ENCODE measurements at regions of chr16 and their contacts with region 1.

Region 1: GRCh38 chr16:84754353-84754856 is 54.6 kb downstream of the USP10 start:
- DNase-seq: peak; percentile 62
- H3K4me3 ChIP-seq: peak overlapping the region in 1 of 2 experiments; percentile 4; a peak in 1 of 4 replicates
- H3K27ac ChIP-seq: no peak overlapping the region
- H3K4me1 ChIP-seq: no peaks in the 10 kb centered on the region; a peak in 1 of 4 replicates
- H3K27me3 ChIP-seq: no peaks in the 10 kb centered on the region
- CTCF ChIP-seq: peak; percentile 85
- EP300 ChIP-seq: no peak
- RAD21 ChIP-seq: peak; percentile 93

Region 2: GRCh38 chr16:84459941-84460405 is 294.4 kb before region 1 on chr16:
- CTCF ChIA-PET with region 1: no interaction called
- POLR2A ChIA-PET with region 1: no interaction called
- DNase-seq: no peak
- H3K4me3 ChIP-seq: no peak overlapping the region
- H3K27ac ChIP-seq: no peak overlapping the region
- H3K4me1 ChIP-seq: no peaks in the 10 kb centered on the region; a peak in 1 of 4 replicates
- H3K27me3 ChIP-seq: no peaks in the 10 kb centered on the region
- CTCF ChIP-seq: no peak
- EP300 ChIP-seq: no peak
- RAD21 ChIP-seq: no peak

Region 3: DNA sequence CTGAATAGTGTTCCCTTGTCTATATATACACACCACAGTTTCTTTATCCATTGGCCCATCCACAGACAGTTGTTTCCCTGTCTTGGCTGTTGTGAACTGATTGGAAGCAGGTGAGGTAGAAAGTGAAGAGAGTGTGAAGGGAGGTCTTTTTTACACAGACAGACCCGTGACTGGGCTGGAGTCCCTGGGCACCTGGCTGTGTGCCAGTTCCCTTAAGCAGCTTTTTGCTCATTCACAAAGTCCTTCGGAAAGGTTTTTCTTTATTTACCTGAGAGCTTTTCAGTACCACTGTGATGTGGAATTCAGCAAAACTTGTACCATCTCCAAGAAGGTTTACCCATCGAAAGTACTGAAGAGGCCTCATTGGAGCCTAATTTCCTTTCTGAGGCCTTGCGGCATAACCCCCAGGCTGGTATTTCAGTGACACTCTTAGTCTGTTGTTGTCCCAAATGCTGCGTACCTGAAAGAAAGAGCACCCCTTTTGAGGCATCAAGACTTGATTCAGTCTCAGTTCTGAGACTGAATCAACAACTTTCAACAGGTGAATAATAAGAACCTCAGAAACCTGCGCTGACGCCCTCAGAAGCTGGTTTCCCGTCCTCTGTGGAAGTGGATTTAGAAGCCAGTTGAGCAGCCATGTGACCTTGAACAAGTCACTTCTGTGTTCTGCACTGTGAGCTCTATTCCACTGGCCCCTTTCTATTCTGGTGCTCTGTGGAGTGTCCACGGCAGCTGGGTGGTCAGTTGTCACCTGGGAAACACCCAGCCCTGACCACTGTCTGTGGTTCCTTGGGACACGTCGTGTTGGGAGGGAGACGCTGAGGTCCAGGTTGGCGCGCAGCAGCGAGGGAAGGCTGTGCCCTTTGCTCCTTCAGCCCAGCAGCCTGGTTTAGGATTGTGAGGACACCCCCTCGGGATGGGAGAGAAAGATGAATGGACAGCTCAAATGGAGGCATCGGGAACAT is 11.5 kb after region 1 on chr16:
- CTCF ChIA-PET with region 1: interaction called, 89 read pairs
- POLR2A ChIA-PET with region 1: no interaction called
- DNase-seq: no peak
- H3K4me3 ChIP-seq: no peak overlapping the region
- H3K27ac ChIP-seq: no peak overlapping the region
- H3K4me1 ChIP-seq: peaks cover 0 to 13% of the 10 kb centered on the region in 2 experiments; a peak in 2 of 4 replicates
- H3K27me3 ChIP-seq: no peaks in the 10 kb centered on the region
- CTCF ChIP-seq: no peak
- EP300 ChIP-seq: no peak
- RAD21 ChIP-seq: no peak

Region 4: DNA sequence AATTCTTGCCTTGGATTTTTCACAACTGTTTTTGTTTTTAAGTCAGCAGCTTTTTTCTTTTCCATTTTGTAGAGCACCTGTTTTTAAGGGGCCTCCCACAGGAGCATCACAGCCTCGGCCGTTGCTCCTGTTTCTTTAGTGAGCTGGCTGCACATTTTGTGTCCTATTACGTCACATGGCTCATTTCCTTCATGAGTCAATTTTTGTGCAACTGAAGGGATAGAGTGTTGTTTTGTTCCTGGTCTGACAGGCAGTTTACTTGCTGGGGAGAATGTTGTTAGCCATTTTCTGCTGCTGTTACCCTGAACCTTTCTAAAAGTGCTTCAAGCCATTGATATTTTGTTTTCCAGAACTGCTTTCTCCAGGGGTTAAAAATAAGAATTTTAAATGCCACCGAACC is 20.4 kb after region 1 on chr16:
- CTCF ChIA-PET with region 1: interaction called, 89 read pairs
- POLR2A ChIA-PET with region 1: no interaction called
- DNase-seq: no peak
- H3K4me3 ChIP-seq: no peak overlapping the region
- H3K27ac ChIP-seq: no peak overlapping the region
- H3K4me1 ChIP-seq: no peaks in the 10 kb centered on the region
- H3K27me3 ChIP-seq: no peaks in the 10 kb centered on the region
- CTCF ChIP-seq: no peak
- EP300 ChIP-seq: no peak
- RAD21 ChIP-seq: no peak

Region 5: DNA sequence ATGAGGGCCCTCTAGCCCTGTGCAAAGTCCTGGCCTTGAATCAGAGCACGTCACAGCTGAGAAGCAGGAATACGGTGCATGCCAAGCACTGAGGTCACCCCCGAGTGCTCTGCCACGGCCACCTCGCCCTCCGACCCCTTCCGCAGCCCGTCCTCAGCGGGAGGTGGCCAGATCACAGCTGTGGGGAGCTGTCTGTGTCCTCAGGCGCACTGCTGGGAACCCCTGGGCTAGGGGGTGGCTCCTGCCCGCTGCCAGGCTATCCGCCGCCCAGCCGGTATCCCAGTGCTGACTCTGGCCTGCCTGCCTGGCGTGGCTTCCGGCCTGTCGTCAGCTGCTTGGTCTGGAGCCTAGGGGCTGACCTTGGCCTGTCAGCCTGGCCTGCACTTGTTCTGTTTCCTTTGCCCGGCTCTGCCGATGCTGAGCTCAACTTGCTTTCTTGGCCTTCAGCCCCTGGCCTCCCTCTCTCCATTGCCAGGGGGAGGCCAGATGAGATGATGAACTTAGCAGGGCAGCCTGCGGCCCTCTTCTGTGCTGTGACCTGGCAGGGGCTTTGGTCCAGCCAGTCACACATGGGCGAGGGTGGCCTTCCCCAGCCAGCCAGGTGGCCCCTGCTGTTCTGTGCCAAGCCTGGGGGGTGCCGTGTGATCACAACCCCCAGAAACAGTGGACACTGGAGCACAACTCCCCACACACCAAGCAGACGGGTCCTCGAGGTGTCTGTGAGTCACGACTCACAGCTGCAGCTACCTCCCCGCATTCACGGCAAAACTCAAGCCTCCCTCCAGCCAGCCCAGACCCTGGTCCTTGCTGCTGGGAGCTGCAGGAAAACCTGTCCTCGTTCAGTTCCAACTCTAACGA is 179.6 kb after region 1 on chr16:
- CTCF ChIA-PET with region 1: interaction called, 12 read pairs
- POLR2A ChIA-PET with region 1: no interaction called
- DNase-seq: peak; percentile 48
- H3K4me3 ChIP-seq: no peak overlapping the region
- H3K27ac ChIP-seq: no peak overlapping the region
- H3K4me1 ChIP-seq: peaks cover 0 to 11% of the 10 kb centered on the region in 2 experiments; a peak in 1 of 4 replicates
- H3K27me3 ChIP-seq: no peaks in the 10 kb centered on the region
- CTCF ChIP-seq: no peak
- EP300 ChIP-seq: no peak
- RAD21 ChIP-seq: no peak

Region 6: GRCh38 chr16:84940670-84941551 is 186.5 kb after region 1 on chr16:
- CTCF ChIA-PET with region 1: interaction called, 10 read pairs
- POLR2A ChIA-PET with region 1: no interaction called
- DNase-seq: peak; percentile 93
- H3K4me3 ChIP-seq: no peak overlapping the region
- H3K27ac ChIP-seq: no peak overlapping the region
- H3K4me1 ChIP-seq: peaks cover 0 to 11% of the 10 kb centered on the region in 2 experiments; a peak in 1 of 4 replicates
- H3K27me3 ChIP-seq: no peaks in the 10 kb centered on the region
- CTCF ChIP-seq: no peak
- EP300 ChIP-seq: 0 out of 4 replicates have a peak, but pooled peaks of 1 of the 2 experiments have one; percentile 18
- RAD21 ChIP-seq: peak; percentile 45; the same call in 1 of the 2 replicates

Region 7: DNA sequence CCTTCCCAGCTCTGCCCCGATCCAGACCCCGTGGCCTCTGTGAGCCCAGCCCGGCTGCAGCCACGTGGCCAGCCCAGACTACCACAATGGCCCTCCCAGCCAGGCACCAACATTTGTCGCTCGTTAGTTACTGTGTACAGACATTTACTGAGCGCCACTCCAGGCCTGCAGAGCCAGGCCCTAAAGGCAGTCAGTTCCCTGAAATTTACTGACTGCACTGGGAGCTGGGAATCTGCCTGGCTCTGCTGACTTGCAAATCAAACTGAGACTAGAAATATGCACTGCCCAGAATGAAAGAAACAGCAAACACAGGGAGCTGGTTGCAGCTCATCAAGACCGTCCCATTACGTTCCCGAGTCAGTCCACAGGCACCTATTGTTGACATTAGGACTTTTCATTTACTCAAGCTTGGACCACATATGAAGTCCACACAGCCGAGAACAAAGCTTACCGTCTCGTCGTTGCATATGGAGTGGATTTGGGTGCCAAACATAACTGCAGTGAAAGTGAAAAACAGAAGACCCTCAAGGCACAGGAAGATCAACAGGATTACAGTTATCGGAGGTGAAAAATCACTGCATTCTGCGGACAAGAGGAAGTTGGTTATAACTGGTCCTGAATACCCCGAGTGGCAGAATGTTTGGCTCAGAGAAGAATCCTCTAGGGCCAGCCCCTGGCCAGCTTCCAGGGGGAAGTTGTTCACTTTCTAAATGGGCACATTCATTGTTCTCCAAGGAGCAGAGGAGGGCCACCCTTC is 222.4 kb after region 1 on chr16:
- CTCF ChIA-PET with region 1: interaction called, 428 read pairs
- POLR2A ChIA-PET with region 1: no interaction called
- DNase-seq: no peak
- H3K4me3 ChIP-seq: no peak overlapping the region
- H3K27ac ChIP-seq: no peak overlapping the region
- H3K4me1 ChIP-seq: peaks cover 0 to 17% of the 10 kb centered on the region in 2 experiments; a peak in 1 of 4 replicates
- H3K27me3 ChIP-seq: no peaks in the 10 kb centered on the region
- CTCF ChIP-seq: no peak
- EP300 ChIP-seq: no peak
- RAD21 ChIP-seq: no peak

Region 8: DNA sequence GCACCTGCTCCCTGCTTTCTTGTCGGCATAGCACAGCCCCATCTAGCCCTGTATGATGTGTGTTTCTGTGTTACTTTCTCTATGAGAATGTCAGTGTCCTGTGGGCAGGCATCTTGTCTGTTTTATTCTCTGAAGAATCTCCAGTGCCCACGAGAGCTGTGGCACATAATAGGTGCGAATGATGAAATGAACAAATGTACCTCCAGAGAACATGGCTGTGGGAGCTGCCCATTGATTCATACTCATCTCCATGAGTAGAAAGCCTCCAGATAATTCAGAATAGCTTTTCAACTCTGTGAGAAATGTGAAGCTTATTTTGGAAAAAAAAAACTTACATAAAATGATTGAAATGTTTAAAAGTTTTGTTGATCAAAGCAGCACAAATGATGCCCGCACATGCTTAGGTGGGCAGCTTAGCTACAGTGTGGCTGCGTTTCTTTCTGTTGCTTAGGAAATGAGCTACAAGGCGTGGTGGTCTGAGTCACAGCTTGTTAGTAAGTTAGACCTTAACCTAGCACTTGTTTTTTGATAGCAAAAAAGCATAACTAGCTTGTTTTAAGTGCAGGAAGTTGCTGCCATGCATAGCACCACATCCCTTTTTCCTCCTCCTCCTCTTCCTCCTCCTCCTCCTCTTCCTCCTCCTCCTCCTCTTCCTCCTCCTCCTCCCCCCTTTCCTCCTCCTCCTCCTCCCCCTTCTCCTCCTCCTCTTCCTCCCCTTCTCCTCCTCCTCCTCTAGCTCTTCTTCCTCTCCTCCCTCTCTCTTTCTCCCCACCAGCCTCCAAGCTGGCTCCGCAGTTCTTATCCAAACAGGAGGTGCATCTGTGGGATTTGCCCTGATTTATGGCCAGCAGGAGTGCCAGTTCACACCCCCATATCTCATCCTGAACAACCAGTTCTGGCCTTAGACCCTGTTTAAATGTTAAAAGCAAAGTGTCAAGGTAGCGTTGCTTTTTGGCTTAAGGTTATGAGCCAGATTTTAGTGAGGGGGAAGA is 1366.1 kb after region 1 on chr16:
- CTCF ChIA-PET with region 1: no interaction called
- POLR2A ChIA-PET with region 1: no interaction called
- DNase-seq: no peak
- H3K4me3 ChIP-seq: no peak overlapping the region
- H3K27ac ChIP-seq: no peak overlapping the region
- H3K4me1 ChIP-seq: no peaks in the 10 kb centered on the region
- H3K27me3 ChIP-seq: peaks cover 71% of the 10 kb centered on the region
- CTCF ChIP-seq: no peak
- EP300 ChIP-seq: no peak
- RAD21 ChIP-seq: no peak

Measured in SK-N-SH (cell line).